ENCODE measurements at regions of chr7 and their contacts with region 1.

Region 1: GRCh38 chr7:108308903-108309302 is 147.3 kb downstream of the NRCAM start:
- DNase-seq: no peak
- H3K4me3 ChIP-seq: no peak overlapping the region
- H3K27ac ChIP-seq: no peak overlapping the region
- H3K4me1 ChIP-seq: no peaks in the 10 kb centered on the region
- CTCF ChIP-seq: no peak

Region 2: GRCh38 chr7:108284349-108285002 is 24.4 kb before region 1 on chr7:
- CTCF ChIA-PET with region 1: no interaction called
- POLR2A ChIA-PET with region 1: no interaction called
- intact Hi-C with region 1: loop called (anchors 1 kb)
- DNase-seq: no peak
- H3K4me3 ChIP-seq: no peak overlapping the region
- H3K27ac ChIP-seq: no peak overlapping the region
- H3K4me1 ChIP-seq: no peaks in the 10 kb centered on the region
- CTCF ChIP-seq: no peak

Region 3: GRCh38 chr7:108592646-108593201 is 283.8 kb after region 1 on chr7:
- CTCF ChIA-PET with region 1: no interaction called
- POLR2A ChIA-PET with region 1: no interaction called
- intact Hi-C with region 1: no loop called
- DNase-seq: peak; percentile 35
- H3K4me3 ChIP-seq: no peak overlapping the region
- H3K27ac ChIP-seq: no peak overlapping the region
- H3K4me1 ChIP-seq: no peaks in the 10 kb centered on the region
- CTCF ChIP-seq: peak; percentile 62

Measured in OCI-LY7 (cell line).